ENCODE measurements at regions of chr11 and their contacts with region 1.

Region 1: DNA sequence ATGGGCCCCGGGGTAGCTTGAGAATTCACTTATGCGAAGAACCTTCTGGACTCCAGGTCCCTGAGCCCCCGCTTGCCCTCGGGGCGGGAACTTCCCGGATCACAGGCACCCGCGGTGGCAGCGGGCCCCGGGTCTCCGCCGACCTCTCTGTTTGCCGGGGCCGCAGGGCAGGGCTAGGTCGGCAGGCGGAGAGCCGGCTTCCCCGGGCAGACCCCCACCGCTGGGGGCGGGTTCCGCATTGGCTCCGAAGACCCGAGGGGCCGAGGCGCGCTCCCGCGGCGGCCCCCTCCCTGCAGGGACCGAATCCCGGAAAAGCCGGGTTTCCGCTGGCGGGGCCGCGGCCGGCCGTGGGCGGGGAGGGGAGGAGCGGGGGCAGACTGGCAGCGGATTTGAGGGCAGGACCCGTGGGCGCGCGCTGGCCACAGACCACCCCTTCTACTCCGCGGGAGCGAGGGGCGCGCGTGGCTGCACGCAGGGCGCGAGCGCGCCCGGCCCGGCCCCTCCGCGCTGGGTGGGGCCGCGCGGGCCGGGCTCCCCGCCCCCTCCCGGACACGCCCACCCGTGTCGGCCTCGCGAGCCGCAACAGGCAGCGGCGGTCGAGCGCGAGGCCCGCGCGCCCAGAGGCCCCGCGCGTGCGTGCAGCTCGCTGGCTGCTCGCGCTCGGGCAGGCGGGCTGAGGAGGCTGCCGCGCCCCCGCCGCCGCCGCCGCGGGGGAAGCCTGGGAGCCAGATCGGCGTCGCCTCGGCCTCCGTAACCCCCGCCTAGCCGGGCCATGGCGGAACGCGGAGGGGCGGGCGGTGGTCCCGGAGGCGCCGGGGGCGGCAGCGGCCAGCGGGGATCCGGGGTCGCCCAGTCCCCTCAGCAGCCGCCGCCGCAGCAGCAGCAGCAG is at the start of gene PACS1:
- H3K4me3 ChIP-seq: peak within 1 kb of the TSS; percentile 76
- H3K27ac ChIP-seq: peak within 1 kb of the TSS; percentile 81
- H3K4me1 ChIP-seq: no peaks in the 10 kb centered on the region; the same call in none of the 2 replicates
- CTCF ChIP-seq: 0 out of 2 replicates have a peak, but pooled peaks have one; percentile 11

Region 2: DNA sequence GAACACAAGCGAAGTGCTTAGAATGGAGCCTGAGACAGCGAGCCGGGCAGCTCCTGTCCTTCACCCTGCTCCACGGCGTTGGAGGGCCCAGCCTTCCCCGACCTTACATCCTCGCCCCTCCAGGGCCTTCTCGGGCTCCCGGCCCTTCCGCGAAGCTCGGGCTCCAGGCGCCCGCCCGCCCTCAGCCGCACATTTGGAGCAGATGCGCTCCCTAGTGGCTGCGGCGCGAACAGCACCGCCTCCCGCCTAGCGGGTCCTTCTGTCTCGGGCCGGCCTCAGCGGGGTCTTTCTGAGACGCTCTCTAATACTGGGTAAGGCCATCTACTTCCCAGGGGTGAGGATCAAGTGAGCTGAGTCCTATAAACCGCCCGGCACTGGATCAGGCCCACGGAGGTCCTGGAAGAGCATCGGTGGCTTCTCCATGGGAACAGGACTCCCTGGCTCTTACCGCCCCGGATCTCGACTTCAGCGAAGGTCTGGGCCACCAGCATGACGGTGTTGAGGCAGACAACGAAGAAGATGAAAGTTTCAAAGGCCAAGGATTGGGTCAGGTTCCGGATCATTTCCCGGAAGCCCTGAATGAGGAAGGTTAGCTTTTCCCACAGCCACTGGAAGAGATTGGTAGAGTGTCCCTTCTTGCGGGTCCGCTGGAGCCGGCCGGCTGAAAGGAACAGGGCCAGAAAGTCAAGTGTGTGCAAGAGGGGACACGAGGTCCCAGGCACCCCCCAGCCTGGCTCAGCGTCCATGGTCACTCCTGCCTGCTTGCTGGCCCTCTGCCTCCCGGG is 47.4 kb before region 1 on chr11:
- CTCF ChIA-PET with region 1: interaction called, 14 read pairs
- POLR2A ChIA-PET with region 1: no interaction called
- H3K4me3 ChIP-seq: no peak overlapping the region
- H3K27ac ChIP-seq: no peak overlapping the region
- H3K4me1 ChIP-seq: no peaks in the 10 kb centered on the region
- CTCF ChIP-seq: peak; percentile 74

Region 3: GRCh38 chr11:66051766-66052663 is 17.9 kb before region 1 on chr11 and contains the start of gene SF3B2:
- CTCF ChIA-PET with region 1: interaction called, 36 read pairs
- POLR2A ChIA-PET with region 1: interaction called, 7 read pairs
- H3K4me3 ChIP-seq: peak within 1 kb of the TSS; percentile 90
- H3K27ac ChIP-seq: peak within 1 kb of the TSS; percentile 93
- H3K4me1 ChIP-seq: peaks cover 8% of the 10 kb centered on the region
- CTCF ChIP-seq: no peak

Region 4: DNA sequence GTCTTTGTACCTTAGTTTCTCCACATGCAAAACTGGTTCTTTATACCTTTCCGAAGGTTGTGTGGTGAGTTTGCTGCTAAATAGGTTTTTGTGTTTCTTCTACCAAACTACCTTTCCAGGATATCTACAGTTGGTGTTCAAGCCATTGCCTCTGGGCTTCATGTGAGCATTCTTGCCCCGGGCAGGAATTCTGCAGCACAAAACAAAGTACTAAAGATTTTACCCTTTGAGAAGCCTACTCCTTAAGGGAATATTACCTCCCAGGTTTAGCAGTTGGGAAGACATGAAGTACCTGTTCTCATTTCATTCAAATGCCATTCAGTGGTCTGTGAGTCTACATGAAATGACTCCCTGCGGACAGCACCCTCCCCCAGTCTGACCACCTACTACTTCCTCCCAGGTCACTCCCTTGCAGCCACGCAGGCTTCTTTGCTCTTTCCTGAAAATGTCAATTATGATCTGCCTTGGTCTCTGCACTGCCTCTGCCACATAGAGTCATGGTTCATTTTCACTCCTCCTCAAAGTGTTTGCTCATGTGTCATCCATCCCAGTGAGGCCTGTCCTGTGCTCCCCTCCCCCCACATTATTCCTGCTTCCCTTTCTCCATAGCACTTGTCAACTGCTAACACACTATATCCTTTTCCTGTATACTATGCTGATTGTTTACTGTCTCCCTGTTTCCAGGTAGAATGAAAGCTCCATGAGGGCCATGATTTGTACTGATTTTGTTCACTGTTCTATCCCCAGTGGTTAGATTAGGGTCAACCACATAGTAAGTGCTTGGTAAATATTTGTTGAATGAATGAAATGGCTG is 37.0 kb after region 1 on chr11:
- CTCF ChIA-PET with region 1: interaction called, 11 read pairs
- POLR2A ChIA-PET with region 1: no interaction called
- H3K4me3 ChIP-seq: no peak overlapping the region
- H3K27ac ChIP-seq: no peak overlapping the region
- H3K4me1 ChIP-seq: no peaks in the 10 kb centered on the region; the same call in 1 of the 2 replicates
- CTCF ChIP-seq: no peak

Region 5: GRCh38 chr11:66136752-66137123 is 66.8 kb after region 1 on chr11:
- CTCF ChIA-PET with region 1: interaction called, 61 read pairs
- POLR2A ChIA-PET with region 1: interaction called, 3 read pairs
- H3K4me3 ChIP-seq: no peak overlapping the region
- H3K27ac ChIP-seq: no peak overlapping the region
- H3K4me1 ChIP-seq: no peaks in the 10 kb centered on the region
- CTCF ChIP-seq: no peak